ENCODE measurements at regions of chr7 and their contacts with region 1.

Region 1: DNA sequence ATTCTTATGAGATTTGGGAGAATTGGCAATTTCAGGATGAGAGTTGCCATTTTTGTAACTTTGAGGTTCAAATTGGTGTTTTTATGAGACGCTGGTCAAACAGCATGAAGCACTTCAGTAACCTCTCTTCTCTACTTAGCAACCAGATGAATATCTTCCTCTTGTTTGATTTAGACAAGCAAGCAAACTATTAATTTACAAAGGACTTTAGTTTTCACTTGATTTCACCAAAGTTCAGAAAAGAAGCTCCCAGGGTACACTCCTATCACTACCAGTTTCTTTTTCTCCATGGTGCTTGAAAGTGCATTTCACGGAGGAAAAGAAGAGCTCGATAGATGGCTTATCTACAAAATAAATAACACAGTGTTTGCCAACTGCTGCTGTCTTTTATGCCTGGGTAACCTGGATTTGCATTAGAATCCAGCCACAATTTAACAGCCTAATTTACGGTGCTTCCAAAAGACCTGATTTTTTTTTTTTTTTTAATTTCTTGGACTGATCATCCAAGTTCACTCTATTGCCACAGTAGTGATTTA is 275.7 kb downstream of the GPR37 start:
- DNase-seq: no peak
- ATAC-seq: 0 out of 2 replicates have a peak, but pooled peaks have one; percentile 13
- H3K4me3 ChIP-seq: no peak overlapping the region
- H3K27ac ChIP-seq: no peak overlapping the region
- H3K4me1 ChIP-seq: peaks cover 4% of the 10 kb centered on the region; the same call in 1 of the 2 replicates
- H3K27me3 ChIP-seq: no peaks in the 10 kb centered on the region
- CTCF ChIP-seq: no peak

Region 2: GRCh38 chr7:124452186-124452585 is 37.7 kb before region 1 on chr7:
- CTCF ChIA-PET with region 1: no interaction called
- POLR2A ChIA-PET with region 1: no interaction called
- intact Hi-C with region 1: no loop called
- DNase-seq: no peak
- ATAC-seq: no peak
- H3K4me3 ChIP-seq: no peak overlapping the region
- H3K27ac ChIP-seq: no peak overlapping the region
- H3K4me1 ChIP-seq: no peaks in the 10 kb centered on the region
- H3K27me3 ChIP-seq: no peaks in the 10 kb centered on the region
- CTCF ChIP-seq: no peak

Region 3: DNA sequence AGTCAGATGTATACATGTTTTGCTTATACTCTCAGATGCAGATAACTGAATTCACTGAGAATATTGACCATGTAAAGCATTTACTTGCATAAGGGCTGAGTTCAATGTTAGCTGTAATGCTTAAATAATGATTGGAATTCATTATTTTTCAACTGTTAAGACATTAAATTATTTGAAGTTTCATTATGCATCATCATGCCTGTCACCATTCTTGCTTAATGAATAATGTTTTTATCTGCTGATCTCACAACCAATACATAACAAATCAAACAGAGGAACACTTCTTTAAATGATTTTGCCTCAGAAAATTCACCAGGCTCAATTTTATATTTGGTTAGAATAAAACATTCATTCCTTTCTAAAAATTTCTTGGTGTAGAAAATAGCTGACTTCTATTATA is 42.3 kb after region 1 on chr7:
- CTCF ChIA-PET with region 1: no interaction called
- POLR2A ChIA-PET with region 1: no interaction called
- intact Hi-C with region 1: loop called (anchors 5 kb)
- DNase-seq: peak; percentile 47
- ATAC-seq: peak; percentile 23
- H3K4me3 ChIP-seq: no peak overlapping the region
- H3K27ac ChIP-seq: no peak overlapping the region
- H3K4me1 ChIP-seq: peaks cover 21% of the 10 kb centered on the region
- H3K27me3 ChIP-seq: no peaks in the 10 kb centered on the region
- CTCF ChIP-seq: no peak

Measured in PC-3 (cell line).